Calu3 (cell line): ENCODE measurements at regions of chr18 and their contacts with region 1.

Region 1: DNA sequence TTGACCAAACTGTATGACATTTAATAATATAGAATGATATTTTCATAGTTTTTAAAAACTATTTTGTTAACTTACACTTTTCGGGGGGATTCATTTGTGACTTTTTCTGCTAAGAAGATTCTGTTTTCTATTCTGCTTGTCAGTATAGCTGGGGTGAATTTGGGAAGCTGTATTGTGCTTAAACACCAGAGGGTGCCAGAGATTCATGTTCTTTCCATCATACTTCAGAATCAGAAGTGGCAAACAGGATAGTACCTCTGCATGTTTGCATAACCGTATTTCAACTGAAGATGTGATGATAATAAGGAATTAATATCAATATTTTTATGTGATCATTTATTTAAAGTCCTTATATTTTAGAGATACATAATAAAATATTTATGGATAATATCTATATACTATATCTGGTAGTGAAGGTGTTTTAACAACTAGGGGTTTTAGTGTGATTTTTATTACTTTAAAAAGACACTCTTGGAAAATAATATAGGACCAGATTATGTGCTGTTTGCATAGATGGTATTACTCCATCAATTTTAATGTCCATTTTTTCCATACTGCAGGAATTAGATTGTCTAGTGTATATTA is 81.0 kb downstream of the TAF4B start:
- DNase-seq: peak; percentile 56
- H3K4me3 Mint-ChIP-seq: no peak overlapping the region
- H3K27ac Mint-ChIP-seq: no peak overlapping the region
- H3K4me1 Mint-ChIP-seq: no peaks in the 10 kb centered on the region
- H3K27me3 Mint-ChIP-seq: no peaks in the 10 kb centered on the region
- CTCF ChIP-seq: peak; percentile 50

Region 2: GRCh38 chr18:26133652-26134051 is 173.6 kb before region 1 on chr18 and contains the start of gene PSMA8:
- CTCF ChIA-PET with region 1: no interaction called
- intact Hi-C with region 1: no loop called
- DNase-seq: no peak
- H3K4me3 Mint-ChIP-seq: no peak within 1 kb of the TSS
- H3K27ac Mint-ChIP-seq: no peak within 1 kb of the TSS
- H3K4me1 Mint-ChIP-seq: no peaks in the 10 kb centered on the region
- H3K27me3 Mint-ChIP-seq: no peaks in the 10 kb centered on the region
- CTCF ChIP-seq: no peak
- total RNA-seq, gene PSMA8: not detected in 2 replicates

Region 3: GRCh38 chr18:26268454-26268853 is 38.8 kb before region 1 on chr18:
- CTCF ChIA-PET with region 1: no interaction called
- intact Hi-C with region 1: no loop called
- DNase-seq: no peak
- H3K4me3 Mint-ChIP-seq: no peak overlapping the region
- H3K27ac Mint-ChIP-seq: no peak overlapping the region
- H3K4me1 Mint-ChIP-seq: no peaks in the 10 kb centered on the region
- H3K27me3 Mint-ChIP-seq: no peaks in the 10 kb centered on the region
- CTCF ChIP-seq: no peak

Region 4: GRCh38 chr18:26342648-26343047 is 35.4 kb after region 1 on chr18:
- CTCF ChIA-PET with region 1: no interaction called
- intact Hi-C with region 1: loop called (anchors 1 kb)
- DNase-seq: peak; percentile 20
- H3K4me3 Mint-ChIP-seq: no peak overlapping the region
- H3K27ac Mint-ChIP-seq: peak overlapping the region; percentile 75
- H3K4me1 Mint-ChIP-seq: peaks cover 18% of the 10 kb centered on the region
- H3K27me3 Mint-ChIP-seq: no peaks in the 10 kb centered on the region
- CTCF ChIP-seq: no peak

Region 5: DNA sequence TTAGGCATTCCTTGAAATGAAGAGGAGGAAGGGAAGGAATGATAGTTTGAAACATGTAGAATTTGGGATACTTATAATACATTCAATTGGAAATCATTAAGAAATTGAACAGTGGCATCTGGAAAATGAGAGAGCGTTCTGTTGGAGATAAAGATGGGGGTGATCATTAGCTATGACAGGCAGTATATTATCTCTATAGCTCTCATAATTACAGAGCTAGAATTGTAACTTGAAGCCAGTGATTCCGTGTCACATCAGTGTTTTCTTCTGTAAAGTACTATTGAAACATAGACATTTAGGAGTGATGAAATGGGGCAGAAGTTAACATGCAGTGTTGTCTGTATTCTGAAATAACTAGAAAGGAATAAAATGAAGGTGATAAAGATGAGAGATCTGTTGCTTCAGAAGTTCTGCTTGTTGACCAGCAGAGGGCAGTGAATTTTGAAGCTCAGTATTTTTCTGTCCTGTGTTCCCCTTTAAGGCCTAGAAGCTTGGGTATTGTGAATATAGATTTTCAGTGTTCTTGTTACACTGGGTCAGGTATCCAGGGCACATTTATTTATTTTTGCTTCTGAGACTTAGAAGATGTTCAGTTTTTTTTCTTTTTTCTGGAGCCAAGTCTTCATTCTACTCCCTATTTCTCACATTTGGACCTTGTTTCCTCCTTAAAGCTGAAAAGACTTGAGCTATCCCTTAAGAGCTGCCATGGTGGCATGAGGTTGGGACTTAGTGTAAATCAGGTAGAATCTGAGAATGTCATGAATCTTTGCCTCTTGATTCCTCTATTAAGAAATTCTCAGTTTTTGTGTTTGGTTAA is 76.4 kb after region 1 on chr18:
- CTCF ChIA-PET with region 1: interaction called, 6 read pairs
- intact Hi-C with region 1: loop called (anchors 1 kb)
- DNase-seq: peak; percentile 22
- H3K4me3 Mint-ChIP-seq: no peak overlapping the region
- H3K27ac Mint-ChIP-seq: no peak overlapping the region
- H3K4me1 Mint-ChIP-seq: peaks cover 41% of the 10 kb centered on the region
- H3K27me3 Mint-ChIP-seq: no peaks in the 10 kb centered on the region
- CTCF ChIP-seq: peak; percentile 73

Region 6: GRCh38 chr18:26593365-26594320 is 286.4 kb after region 1 on chr18:
- CTCF ChIA-PET with region 1: no interaction called
- intact Hi-C with region 1: no loop called
- DNase-seq: no peak
- H3K4me3 Mint-ChIP-seq: no peak overlapping the region
- H3K27ac Mint-ChIP-seq: no peak overlapping the region
- H3K4me1 Mint-ChIP-seq: no peaks in the 10 kb centered on the region
- H3K27me3 Mint-ChIP-seq: peaks cover 28% of the 10 kb centered on the region
- CTCF ChIP-seq: no peak

Region 7: DNA sequence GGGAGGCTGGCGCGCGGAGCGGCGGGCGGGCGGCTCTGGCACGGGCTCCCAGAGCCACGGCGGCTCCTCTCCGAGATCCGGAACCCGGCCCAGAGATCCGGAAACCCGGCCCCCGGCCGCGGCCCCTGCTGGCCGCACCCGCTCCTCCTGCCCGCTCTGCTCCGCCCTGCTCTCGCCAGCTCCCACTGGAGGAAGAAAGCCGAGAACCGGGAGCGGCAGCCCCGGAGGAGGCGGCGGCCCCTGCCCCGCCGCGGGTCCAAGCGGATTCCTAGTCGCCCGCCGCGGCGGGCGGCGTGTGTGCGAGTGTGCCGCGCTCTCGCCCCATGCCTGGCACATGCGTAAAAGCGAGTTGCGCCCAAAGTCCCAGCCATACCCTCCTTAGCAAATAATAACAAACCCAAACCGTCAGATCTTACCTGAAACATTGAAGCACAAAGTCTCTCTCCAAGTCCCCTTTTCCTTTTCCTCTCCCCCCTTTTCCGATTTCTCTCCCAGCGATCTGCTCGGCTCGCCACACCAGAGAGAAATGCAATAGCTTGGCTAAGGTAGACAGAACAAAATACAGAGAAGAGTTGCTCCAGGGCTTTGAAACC is 349.8 kb after region 1 on chr18:
- CTCF ChIA-PET with region 1: no interaction called
- intact Hi-C with region 1: loop called (anchors 2 kb)
- DNase-seq: peak; percentile 76
- H3K4me3 Mint-ChIP-seq: peak overlapping the region; percentile 86
- H3K27ac Mint-ChIP-seq: peak overlapping the region; percentile 74
- H3K4me1 Mint-ChIP-seq: peaks cover 31% of the 10 kb centered on the region
- H3K27me3 Mint-ChIP-seq: peaks cover 21% of the 10 kb centered on the region
- CTCF ChIP-seq: no peak